GM23248 (cell line): ENCODE measurements at regions of chr12 and their contacts with region 1.

Region 1: GRCh38 chr12:42469355-42470175 is 120.0 kb downstream of the PRICKLE1 start:
- DNase-seq: no peak
- H3K4me3 ChIP-seq: no peak overlapping the region
- H3K27ac ChIP-seq: no peak overlapping the region
- H3K4me1 ChIP-seq: peaks cover 37% of the 10 kb centered on the region
- H3K27me3 ChIP-seq: no peaks in the 10 kb centered on the region

Region 2: DNA sequence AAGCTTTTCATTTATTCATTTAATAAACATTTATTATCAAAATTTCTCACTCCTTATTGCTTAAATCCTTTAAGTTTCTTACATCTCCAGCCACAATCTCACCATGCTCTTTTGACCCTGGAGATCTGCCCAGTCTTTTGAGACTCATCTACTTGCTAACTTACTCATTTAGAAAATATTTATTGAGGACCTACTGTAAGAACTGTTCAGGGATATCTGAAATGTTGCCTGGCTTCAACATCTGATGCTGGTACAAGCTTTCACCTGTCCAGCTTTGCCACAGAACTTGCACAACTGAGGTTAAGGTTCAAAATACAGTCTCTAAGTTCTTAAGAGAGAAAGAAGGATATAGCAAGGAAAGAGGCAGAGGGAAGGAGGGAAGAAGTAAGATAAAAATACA is 307.4 kb before region 1 on chr12:
- in situ Hi-C with region 1: no loop called
- DNase-seq: peak; percentile 21
- H3K4me3 ChIP-seq: no peak overlapping the region
- H3K27ac ChIP-seq: no peak overlapping the region
- H3K4me1 ChIP-seq: peaks cover 22% of the 10 kb centered on the region
- H3K27me3 ChIP-seq: no peaks in the 10 kb centered on the region

Region 3: DNA sequence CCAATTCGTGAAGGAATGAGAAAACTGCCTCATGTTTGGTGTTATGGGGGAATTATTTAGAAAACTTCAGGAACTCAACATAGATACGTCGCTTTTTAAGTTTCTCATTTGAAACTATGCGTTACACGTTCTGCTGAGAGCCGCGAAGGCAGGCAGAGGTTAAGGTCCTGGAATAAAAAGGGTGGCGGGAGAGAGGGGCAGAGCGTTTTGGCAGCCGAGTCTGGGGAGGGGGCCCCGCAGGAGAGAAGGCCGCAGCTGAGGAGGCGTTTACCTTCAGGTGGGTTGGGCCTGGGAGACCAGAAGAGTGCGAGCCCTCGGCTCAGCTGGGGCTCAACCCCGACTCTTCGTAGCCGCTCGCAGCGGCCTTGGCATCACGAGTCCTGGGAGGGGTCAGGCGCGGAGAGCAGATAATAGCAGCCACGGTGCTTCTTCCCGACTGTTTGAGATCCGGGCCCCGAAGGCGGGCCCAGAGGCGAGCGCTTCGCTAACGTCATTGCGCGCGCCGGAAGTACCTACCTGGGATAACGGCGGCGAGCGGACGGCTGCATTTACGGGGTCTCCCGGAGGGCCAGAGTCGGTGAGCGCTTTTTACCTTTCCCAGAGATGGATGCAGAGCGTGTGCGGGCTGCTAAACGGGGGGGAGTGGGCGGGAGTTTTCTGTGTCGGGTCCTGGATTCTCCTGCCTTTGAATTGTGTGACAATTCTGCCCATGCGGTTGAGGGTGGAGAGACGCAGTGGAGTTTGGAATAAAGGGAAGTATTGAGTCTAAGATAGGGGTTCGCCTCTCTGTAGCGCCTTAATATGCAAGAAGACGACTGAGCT is 143.7 kb before region 1 on chr12 and contains the starts of genes PPHLN1 and ZCRB1:
- in situ Hi-C with region 1: no loop called
- DNase-seq: peak; percentile 93
- H3K4me3 ChIP-seq: peak within 1 kb of the TSS; percentile 93
- H3K27ac ChIP-seq: peak within 1 kb of the TSS; percentile 71
- H3K4me1 ChIP-seq: peaks cover 12% of the 10 kb centered on the region
- H3K27me3 ChIP-seq: no peaks in the 10 kb centered on the region
- total RNA-seq, gene PPHLN1: 55.3 and 77.3 TPM in 2 replicates
- total RNA-seq, gene ZCRB1: 20.6 and 26.8 TPM in 2 replicates

Region 4: GRCh38 chr12:42372154-42372791 is 97.3 kb before region 1 on chr12:
- in situ Hi-C with region 1: no loop called
- DNase-seq: peak; percentile 52
- H3K4me3 ChIP-seq: no peak overlapping the region
- H3K27ac ChIP-seq: no peak overlapping the region
- H3K4me1 ChIP-seq: no peaks in the 10 kb centered on the region
- H3K27me3 ChIP-seq: no peaks in the 10 kb centered on the region

Region 5: DNA sequence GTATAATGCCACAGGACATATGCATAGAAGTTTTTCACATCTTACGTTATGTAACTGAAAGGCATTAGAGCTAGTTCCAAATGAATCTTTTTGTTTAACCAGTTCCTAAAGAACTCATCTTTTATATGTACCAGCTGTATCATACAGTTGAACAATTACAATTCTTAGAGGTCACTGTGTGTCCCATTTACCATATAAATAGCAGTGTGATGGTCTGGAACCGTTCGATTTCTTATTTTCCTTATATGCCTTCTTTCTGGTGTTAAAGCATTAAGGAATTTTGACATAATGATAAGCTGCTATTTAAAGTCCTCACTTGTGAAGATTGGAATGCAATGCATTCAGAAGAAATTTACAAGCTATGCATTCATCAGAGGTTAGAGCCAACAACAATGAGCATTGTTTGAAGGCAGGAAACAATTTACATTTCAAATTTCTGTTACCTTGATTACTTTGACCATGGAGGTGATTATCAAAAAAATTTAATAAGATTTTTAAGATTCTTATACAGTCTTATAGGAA is 200.0 kb after region 1 on chr12:
- in situ Hi-C with region 1: no loop called
- DNase-seq: peak; percentile 16
- H3K4me3 ChIP-seq: no peak overlapping the region; the same call in 1 of the 2 replicates
- H3K27ac ChIP-seq: no peak overlapping the region
- H3K4me1 ChIP-seq: peaks cover 13% of the 10 kb centered on the region
- H3K27me3 ChIP-seq: no peaks in the 10 kb centered on the region

Region 6: GRCh38 chr12:43338848-43339526 is 869.4 kb after region 1 on chr12:
- in situ Hi-C with region 1: loop called (anchors 10 kb)
- DNase-seq: peak; percentile 78
- H3K4me3 ChIP-seq: peak overlapping the region; percentile 17
- H3K27ac ChIP-seq: peak overlapping the region; percentile 59
- H3K4me1 ChIP-seq: peaks cover 42% of the 10 kb centered on the region
- H3K27me3 ChIP-seq: no peaks in the 10 kb centered on the region